CD8-positive, alpha-beta memory T cell (primary cell): ENCODE measurements at regions of chr6 and their contacts with region 1.

Region 1: GRCh38 chr6:3251462-3252314 is 7.1 kb upstream of the PSMG4 start:
- DNase-seq: peak; percentile 68 to 86 (median 72)
- H3K4me3 ChIP-seq: no peak overlapping the region
- H3K4me3 Mint-ChIP-seq: peak overlapping the region in 4 of 7 donors; percentile 2 to 71 (median 57)
- H3K27ac ChIP-seq: no peak overlapping the region
- H3K27ac Mint-ChIP-seq: peak overlapping the region in 3 of 8 donors; percentile 0 to 83 (median 75)
- H3K4me1 ChIP-seq: peaks cover 7% of the 10 kb centered on the region
- H3K4me1 Mint-ChIP-seq: peaks cover 7 to 12% (median 11%) of the 10 kb centered on the region in 3 donors
- H3K27me3 ChIP-seq: peaks cover 4% of the 10 kb centered on the region
- H3K27me3 Mint-ChIP-seq: peaks cover 18 to 33% of the 10 kb centered on the region in 2 donors

Region 2: DNA sequence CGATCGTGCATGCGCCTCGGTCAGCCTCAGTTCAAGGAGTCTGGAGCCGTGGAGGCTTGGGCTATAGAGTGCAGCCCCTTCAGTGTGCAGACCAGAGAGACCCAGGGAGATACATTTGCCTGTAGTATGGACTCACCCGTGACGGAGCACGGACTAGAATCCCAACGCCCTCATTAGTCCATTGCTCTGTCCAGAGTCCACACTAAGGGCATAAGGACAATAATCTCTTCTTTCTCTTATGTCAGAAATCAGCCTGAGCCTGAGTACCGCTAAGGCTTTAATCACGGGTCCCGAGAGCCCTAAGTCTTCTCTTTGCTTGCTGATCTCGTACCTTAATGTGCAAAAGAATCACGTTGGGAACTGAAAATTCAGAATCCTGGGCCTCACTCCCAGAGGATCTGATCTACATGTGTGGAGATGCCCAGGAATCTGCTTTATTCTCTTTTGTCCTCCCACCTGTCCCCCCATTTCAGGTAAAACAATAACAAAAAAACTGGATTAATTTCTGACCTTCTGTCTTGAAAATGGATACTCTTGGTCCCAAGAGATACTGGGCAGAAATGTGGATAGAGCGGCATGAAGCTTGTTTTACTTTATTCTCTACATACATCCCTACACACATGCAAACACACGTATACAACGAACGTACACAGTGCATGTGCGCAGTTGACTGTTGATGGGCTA is 132.5 kb before region 1 on chr6:
- CTCF ChIA-PET with region 1: interaction called, 13 read pairs
- POLR2A ChIA-PET with region 1: no interaction called
- DNase-seq: no peak
- H3K4me3 ChIP-seq: peak overlapping the region; percentile 75
- H3K4me3 Mint-ChIP-seq: peak overlapping the region; percentile 87 to 97 (median 91)
- H3K27ac ChIP-seq: peak overlapping the region; percentile 90
- H3K27ac Mint-ChIP-seq: peak overlapping the region; percentile 9 to 96 (median 74)
- H3K4me1 ChIP-seq: peaks cover 13% of the 10 kb centered on the region
- H3K4me1 Mint-ChIP-seq: peaks cover 16 to 18% (median 16%) of the 10 kb centered on the region in 3 donors
- H3K27me3 ChIP-seq: no peaks in the 10 kb centered on the region
- H3K27me3 Mint-ChIP-seq: no peaks in the 10 kb centered on the region

Region 3: DNA sequence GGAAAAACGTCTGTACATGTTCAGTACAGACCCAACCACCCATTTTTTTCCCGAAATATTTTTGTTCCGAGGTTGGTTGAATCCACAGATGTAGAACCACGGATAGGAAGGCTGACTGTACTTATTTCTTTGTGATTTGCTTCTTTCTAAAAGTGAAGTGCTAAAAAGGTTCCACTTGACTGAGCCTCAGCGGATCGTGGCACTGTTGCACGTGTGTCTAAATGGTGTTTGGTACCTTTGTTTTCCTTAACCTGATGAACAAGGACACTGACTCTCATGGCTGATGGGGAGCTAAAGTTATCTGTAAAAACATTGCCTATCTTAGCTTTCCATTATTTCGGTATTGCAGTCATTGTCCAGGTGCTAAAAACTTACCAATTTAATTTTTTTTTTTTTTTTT is 127.0 kb before region 1 on chr6:
- CTCF ChIA-PET with region 1: interaction called, 28 read pairs
- POLR2A ChIA-PET with region 1: no interaction called
- DNase-seq: no peak
- H3K4me3 ChIP-seq: no peak overlapping the region
- H3K4me3 Mint-ChIP-seq: no peak overlapping the region
- H3K27ac ChIP-seq: no peak overlapping the region
- H3K27ac Mint-ChIP-seq: no peak overlapping the region
- H3K4me1 ChIP-seq: no peaks in the 10 kb centered on the region
- H3K4me1 Mint-ChIP-seq: peaks cover 0 to 4% (median 4%) of the 10 kb centered on the region in 3 donors
- H3K27me3 ChIP-seq: no peaks in the 10 kb centered on the region
- H3K27me3 Mint-ChIP-seq: peaks cover 0 to 2% of the 10 kb centered on the region in 2 donors

Region 4: DNA sequence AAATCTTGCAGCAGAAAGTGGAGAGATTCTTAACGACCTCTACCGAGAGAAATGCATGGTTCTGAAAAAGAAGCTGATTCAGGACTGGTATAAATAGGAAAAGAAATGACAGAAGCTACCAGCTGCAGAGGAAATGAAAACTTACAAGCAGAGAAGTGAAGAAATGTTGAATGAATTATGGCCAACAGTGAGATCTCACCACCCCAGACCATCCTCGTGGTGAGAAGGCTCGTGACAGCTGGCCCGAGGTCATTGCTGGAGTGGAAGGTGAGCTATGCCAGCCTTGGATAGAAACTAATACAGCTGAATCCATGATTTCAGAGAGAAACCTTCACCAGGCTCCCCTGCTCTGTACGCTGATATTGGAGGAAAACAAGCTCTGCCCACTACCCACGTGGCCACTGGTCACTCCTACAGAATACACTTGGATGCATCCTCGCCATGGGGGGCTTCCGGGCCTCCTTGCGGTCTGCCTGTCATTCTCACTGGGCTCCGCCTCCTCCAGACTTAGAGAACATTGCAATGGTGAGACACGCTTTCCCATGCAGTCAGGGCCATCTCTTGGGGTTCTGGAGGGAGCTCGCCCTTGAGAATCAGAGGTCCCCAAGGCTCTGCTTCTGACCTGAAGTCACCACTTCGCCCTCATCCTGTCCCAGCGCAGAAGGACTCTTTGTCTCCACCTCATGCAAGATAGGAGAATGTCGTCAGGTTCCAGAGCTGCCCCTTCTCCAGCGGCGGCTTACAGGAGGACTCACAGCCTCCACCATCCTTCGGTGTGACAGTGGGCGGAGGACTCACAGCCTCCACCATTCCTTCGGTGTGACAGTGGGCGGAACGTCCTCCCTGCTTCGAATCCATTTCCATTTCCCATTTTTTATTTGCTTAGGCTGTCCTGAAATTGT is 13.7 kb before region 1 on chr6:
- CTCF ChIA-PET with region 1: interaction called, 15 read pairs
- POLR2A ChIA-PET with region 1: no interaction called
- DNase-seq: no peak
- H3K4me3 ChIP-seq: no peak overlapping the region
- H3K4me3 Mint-ChIP-seq: no peak overlapping the region
- H3K27ac ChIP-seq: no peak overlapping the region
- H3K27ac Mint-ChIP-seq: peak overlapping the region in 1 of 8 donors; percentile 12
- H3K4me1 ChIP-seq: no peaks in the 10 kb centered on the region
- H3K4me1 Mint-ChIP-seq: no peaks in the 10 kb centered on the region
- H3K27me3 ChIP-seq: peaks cover 7% of the 10 kb centered on the region
- H3K27me3 Mint-ChIP-seq: peaks cover 46 to 64% of the 10 kb centered on the region in 2 donors

Region 5: GRCh38 chr6:3263085-3263484 is 11.4 kb after region 1 on chr6:
- CTCF ChIA-PET with region 1: interaction called, 35 read pairs
- POLR2A ChIA-PET with region 1: no interaction called
- DNase-seq: no peak
- H3K4me3 ChIP-seq: no peak overlapping the region
- H3K4me3 Mint-ChIP-seq: peak overlapping the region in 3 of 7 donors; percentile 22 to 70 (median 41)
- H3K27ac ChIP-seq: no peak overlapping the region
- H3K27ac Mint-ChIP-seq: peak overlapping the region in 2 of 8 donors; percentile 5 to 51
- H3K4me1 ChIP-seq: peaks cover 33% of the 10 kb centered on the region
- H3K4me1 Mint-ChIP-seq: peaks cover 46 to 77% (median 70%) of the 10 kb centered on the region in 3 donors
- H3K27me3 ChIP-seq: no peaks in the 10 kb centered on the region
- H3K27me3 Mint-ChIP-seq: peaks cover 0 to 3% of the 10 kb centered on the region in 2 donors